Esophagus muscularis mucosa (tissue), 4 donors: ENCODE measurements at regions of chr3 and their contacts with region 1.

Region 1: DNA sequence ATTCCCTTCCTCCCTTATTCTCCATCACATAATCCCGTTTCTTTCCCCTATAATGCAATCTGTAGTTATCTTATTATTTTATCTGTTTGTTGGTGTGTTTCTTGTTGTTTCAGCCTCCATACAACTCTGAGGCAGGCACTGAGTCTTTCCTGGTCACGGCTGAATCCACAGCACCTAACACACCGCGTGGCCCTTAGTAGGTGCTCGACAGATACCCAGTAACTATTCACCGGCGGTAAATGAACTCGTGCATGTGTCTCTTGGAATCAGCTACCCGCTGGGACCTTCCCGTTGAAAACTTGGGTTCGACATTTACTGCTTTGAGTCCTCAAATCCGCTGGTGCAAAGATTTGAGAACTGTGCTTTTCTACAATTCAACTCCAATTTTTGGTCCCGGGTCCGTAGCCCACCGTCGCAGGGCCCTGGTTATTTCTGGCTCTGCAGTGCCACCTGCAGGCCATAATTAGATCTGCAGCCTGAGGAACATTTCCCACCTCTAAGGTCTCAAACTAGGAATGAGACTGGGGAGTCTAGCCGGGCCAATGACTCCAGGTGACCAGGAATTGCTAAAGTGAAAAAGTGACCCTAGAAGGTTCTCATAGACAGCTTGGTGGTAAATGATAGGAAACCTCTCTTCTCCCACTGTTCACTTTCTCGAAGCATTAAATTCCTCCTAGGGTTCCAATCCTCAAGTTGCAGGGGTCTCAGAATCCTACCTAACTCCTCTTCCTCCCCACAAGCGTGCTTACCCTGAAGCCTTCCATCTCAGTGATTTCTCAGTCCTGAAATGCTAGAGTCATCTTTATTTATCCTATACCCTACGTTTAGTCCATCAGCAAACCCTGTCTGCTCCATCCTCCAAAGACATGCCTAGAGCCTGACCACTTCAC is 40.0 kb upstream of the TRH start:
- DNase-seq: no peak
- H3K4me3 ChIP-seq: peak overlapping the region in 3 of 4 donors; percentile 9 to 28 (median 19)
- H3K27ac ChIP-seq: no peak overlapping the region
- H3K4me1 ChIP-seq: peaks cover 0 to 6% (median 0%) of the 10 kb centered on the region in 4 donors
- H3K27me3 ChIP-seq: peaks cover 0 to 4% (median 0%) of the 10 kb centered on the region in 4 donors
- CTCF ChIP-seq: peak; percentile 91 to 98 (median 92)
- EP300 ChIP-seq: no peak
- POLR2A ChIP-seq: no peak

Region 2: DNA sequence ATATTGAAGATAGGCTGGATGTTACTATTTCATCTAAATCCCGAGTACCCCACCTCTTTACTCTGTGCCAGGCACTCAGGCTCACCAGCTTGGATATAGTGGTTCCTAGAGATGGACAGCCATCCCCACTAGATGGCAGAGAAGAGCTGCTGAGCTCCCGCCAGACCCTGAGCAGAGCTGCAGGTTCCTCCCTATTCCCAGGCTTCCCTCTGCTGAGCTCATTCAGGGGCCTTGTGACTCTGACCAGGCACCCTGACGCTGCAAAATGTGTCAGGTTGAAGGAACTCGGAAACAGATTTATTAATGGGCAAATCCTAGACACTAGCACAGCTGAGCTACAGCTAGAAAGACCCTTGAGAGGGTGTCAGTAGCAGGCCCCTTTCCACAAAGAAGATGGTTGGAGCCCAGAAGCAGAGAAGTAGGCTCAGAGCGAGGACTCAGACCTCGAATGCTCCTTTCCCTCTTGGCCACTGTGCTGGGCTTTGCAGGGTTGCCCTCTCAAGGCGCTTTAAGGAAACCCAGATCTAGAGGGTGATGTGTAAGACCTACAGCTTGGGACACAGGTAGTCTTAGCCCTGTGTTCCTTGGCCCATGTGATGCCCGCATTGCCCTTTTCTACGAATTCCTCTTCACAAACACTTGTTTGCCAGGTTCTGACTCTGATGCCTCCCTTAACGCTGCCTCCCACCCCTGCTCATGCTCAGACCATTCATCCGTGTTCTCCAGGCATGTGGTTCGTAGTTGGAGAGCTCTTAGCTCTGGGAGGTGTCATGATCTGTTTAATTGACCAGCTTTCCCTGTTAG is 444.0 kb before region 1 on chr3:
- intact Hi-C with region 1: loop called (anchors 2 kb)
- DNase-seq: peak; percentile 93
- H3K4me3 ChIP-seq: no peak overlapping the region
- H3K27ac ChIP-seq: peak overlapping the region; percentile 62 to 73 (median 68)
- H3K4me1 ChIP-seq: peaks cover 18 to 34% (median 22%) of the 10 kb centered on the region in 4 donors
- H3K27me3 ChIP-seq: no peaks in the 10 kb centered on the region
- CTCF ChIP-seq: peak; percentile 80 to 84 (median 81)
- EP300 ChIP-seq: no peak
- POLR2A ChIP-seq: no peak

Region 3: GRCh38 chr3:129627429-129628168 is 306.9 kb before region 1 on chr3:
- intact Hi-C with region 1: loop called (anchors 2 kb)
- DNase-seq: no peak
- H3K4me3 ChIP-seq: peak overlapping the region; percentile 61 to 75 (median 68)
- H3K27ac ChIP-seq: peak overlapping the region; percentile 91 to 99 (median 92)
- H3K4me1 ChIP-seq: peaks cover 57 to 62% (median 61%) of the 10 kb centered on the region in 4 donors
- H3K27me3 ChIP-seq: no peaks in the 10 kb centered on the region
- CTCF ChIP-seq: peak; percentile 71 to 80 (median 77)
- EP300 ChIP-seq: no peak
- POLR2A ChIP-seq: no peak

Region 4: GRCh38 chr3:129645290-129645689 is 289.2 kb before region 1 on chr3:
- intact Hi-C with region 1: loop called (anchors 5 kb)
- DNase-seq: no peak
- H3K4me3 ChIP-seq: no peak overlapping the region
- H3K27ac ChIP-seq: no peak overlapping the region
- H3K4me1 ChIP-seq: peaks cover 0 to 6% (median 5%) of the 10 kb centered on the region in 4 donors
- H3K27me3 ChIP-seq: no peaks in the 10 kb centered on the region
- CTCF ChIP-seq: no peak
- EP300 ChIP-seq: no peak
- POLR2A ChIP-seq: no peak

Region 5: GRCh38 chr3:129824926-129825541 is 109.4 kb before region 1 on chr3:
- intact Hi-C with region 1: loop called (anchors 5 kb)
- DNase-seq: no peak
- H3K4me3 ChIP-seq: no peak overlapping the region
- H3K27ac ChIP-seq: no peak overlapping the region
- H3K4me1 ChIP-seq: peaks cover 0 to 25% (median 12%) of the 10 kb centered on the region in 4 donors
- H3K27me3 ChIP-seq: no peaks in the 10 kb centered on the region
- CTCF ChIP-seq: peak; percentile 54 to 64 (median 63)
- EP300 ChIP-seq: no peak
- POLR2A ChIP-seq: no peak